ENCODE measurements at regions of chr2 and their contacts with region 1.

Region 1: DNA sequence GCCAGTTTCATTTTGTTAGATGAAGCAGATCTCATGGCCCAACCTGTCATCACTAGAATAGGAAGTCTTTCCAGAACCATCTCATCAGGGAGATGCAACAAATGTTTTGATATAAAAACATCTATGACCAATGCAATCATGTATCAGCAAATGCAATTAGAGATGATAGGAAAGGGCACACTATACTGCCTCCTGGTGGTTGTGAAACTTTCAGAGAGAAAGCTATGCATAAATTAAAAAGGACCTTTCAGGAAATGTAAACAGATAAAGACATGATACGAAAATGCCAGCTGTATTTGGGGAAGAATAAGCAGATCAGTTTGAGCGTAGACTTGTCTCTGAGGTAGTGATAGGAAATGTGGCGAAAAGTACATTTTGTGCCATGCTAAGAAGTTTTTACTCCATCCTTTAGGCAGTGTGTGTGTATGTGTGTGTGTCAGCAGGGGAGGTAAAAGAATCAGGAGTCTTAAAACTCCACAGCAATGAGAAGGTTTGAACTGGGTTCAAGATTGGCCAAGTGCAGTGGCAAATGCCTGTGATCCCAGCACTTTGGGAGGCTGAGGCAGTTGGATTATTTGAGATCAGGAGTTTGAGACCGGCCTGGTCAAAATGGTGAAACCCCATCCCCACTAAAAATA is 479.3 kb downstream of the CPS1 start:
- DNase-seq: no peak
- H3K4me3 ChIP-seq: no peak overlapping the region
- H3K27ac ChIP-seq: no peak overlapping the region
- H3K4me1 ChIP-seq: no peaks in the 10 kb centered on the region; a peak in 2 of 7 replicates
- H3K27me3 ChIP-seq: no peaks in the 10 kb centered on the region
- CTCF ChIP-seq: peak in 2 of 3 experiments; percentile 30 to 66; a peak in 2 of 4 replicates
- EP300 ChIP-seq: no peak
- POLR2A ChIP-seq: no peak
- RAD21 ChIP-seq: peak; percentile 58

Region 2: GRCh38 chr2:210617732-210618330 is 417.8 kb before region 1 on chr2:
- CTCF ChIA-PET with region 1: interaction called, 14 read pairs
- POLR2A ChIA-PET with region 1: no interaction called
- DNase-seq: no peak
- H3K4me3 ChIP-seq: no peak overlapping the region
- H3K27ac ChIP-seq: no peak overlapping the region
- H3K4me1 ChIP-seq: peaks cover 0 to 4% (median 0%) of the 10 kb centered on the region in 4 experiments; a peak in 3 of 7 replicates
- H3K27me3 ChIP-seq: no peaks in the 10 kb centered on the region
- CTCF ChIP-seq: peak in 2 of 3 experiments; percentile 62 to 67; a peak in 3 of 4 replicates
- EP300 ChIP-seq: no peak
- POLR2A ChIP-seq: no peak
- RAD21 ChIP-seq: peak; percentile 90 to 94

Region 3: DNA sequence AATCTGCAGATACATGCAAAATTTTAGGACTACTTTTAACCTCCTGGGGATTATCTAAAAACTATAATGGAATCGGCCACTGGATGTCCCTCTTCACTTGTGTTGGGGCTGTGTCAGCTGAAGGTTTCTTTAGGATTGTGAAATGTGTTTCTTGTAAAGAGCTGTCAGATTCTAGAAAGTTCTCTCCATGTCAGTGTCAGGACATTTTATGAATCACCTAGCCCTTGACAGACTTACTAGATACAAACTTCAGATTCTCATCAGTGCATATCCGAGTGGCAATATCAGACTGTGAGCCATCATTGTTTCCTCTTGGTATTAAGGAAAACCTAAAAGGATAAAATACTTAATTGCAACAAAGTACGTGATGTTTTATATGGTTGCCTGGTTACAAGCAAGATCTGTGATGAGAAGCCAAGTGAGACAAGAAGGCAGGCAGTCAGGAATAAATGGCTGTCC is 372.0 kb before region 1 on chr2:
- CTCF ChIA-PET with region 1: interaction called, 18 read pairs
- POLR2A ChIA-PET with region 1: no interaction called
- DNase-seq: no peak
- H3K4me3 ChIP-seq: no peak overlapping the region
- H3K27ac ChIP-seq: no peak overlapping the region
- H3K4me1 ChIP-seq: no peaks in the 10 kb centered on the region
- H3K27me3 ChIP-seq: no peaks in the 10 kb centered on the region
- CTCF ChIP-seq: peak in 2 of 3 experiments; percentile 50 to 62; a peak in 3 of 4 replicates
- EP300 ChIP-seq: no peak
- POLR2A ChIP-seq: no peak
- RAD21 ChIP-seq: peak; percentile 90 to 91

Region 4: GRCh38 chr2:211049321-211050018 is 13.8 kb after region 1 on chr2:
- CTCF ChIA-PET with region 1: interaction called, 17 read pairs
- POLR2A ChIA-PET with region 1: no interaction called
- DNase-seq: no peak
- H3K4me3 ChIP-seq: no peak overlapping the region
- H3K27ac ChIP-seq: no peak overlapping the region
- H3K4me1 ChIP-seq: no peaks in the 10 kb centered on the region
- H3K27me3 ChIP-seq: no peaks in the 10 kb centered on the region
- CTCF ChIP-seq: no peak
- EP300 ChIP-seq: no peak
- POLR2A ChIP-seq: no peak
- RAD21 ChIP-seq: no peak

Region 5: GRCh38 chr2:211228559-211228958 is 192.9 kb after region 1 on chr2:
- CTCF ChIA-PET with region 1: no interaction called
- POLR2A ChIA-PET with region 1: no interaction called
- DNase-seq: no peak
- H3K4me3 ChIP-seq: no peak overlapping the region
- H3K27ac ChIP-seq: no peak overlapping the region
- H3K4me1 ChIP-seq: no peaks in the 10 kb centered on the region
- H3K27me3 ChIP-seq: no peaks in the 10 kb centered on the region
- CTCF ChIP-seq: no peak
- EP300 ChIP-seq: no peak
- POLR2A ChIP-seq: no peak
- RAD21 ChIP-seq: no peak

Measured in H1 (cell line).